ENCODE measurements at regions of chr3 and their contacts with region 1.

Region 1: DNA sequence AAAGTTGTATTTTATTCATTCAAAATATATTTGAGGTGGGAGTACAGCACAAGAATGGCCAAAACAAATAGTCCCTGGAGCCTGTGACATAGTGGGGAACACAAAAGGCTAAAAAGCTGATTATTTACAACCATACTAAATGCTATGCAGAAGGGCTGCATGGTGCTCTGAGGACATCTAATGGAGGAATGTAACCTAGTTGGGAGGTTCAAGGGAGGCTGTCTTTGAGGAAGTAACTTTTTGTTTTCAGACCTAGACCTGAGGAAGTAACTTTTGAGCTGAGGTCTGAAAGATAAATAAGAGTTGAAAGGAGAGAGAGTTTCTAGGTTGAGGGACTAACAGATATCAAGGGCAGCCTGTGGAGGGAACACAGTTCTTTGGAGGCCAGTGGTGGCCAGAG is 34.8 kb upstream of the RASA2 start:
- DNase-seq: peak in 10 of 14 experiments; percentile 15 to 81 (median 45)
- ATAC-seq: peak; percentile 96
- H3K4me3 ChIP-seq: no peak overlapping the region
- H3K4me3 Mint-ChIP-seq: no peak overlapping the region
- H3K27ac ChIP-seq: peak overlapping the region in 1 of 2 donors; percentile 11
- H3K27ac Mint-ChIP-seq: no peak overlapping the region
- H3K4me1 ChIP-seq: peaks cover 14% of the 10 kb centered on the region
- H3K4me1 Mint-ChIP-seq: peaks cover 14% of the 10 kb centered on the region
- H3K27me3 ChIP-seq: no peaks in the 10 kb centered on the region
- H3K27me3 Mint-ChIP-seq: no peaks in the 10 kb centered on the region
- CTCF ChIP-seq: peak; percentile 88

Region 2: DNA sequence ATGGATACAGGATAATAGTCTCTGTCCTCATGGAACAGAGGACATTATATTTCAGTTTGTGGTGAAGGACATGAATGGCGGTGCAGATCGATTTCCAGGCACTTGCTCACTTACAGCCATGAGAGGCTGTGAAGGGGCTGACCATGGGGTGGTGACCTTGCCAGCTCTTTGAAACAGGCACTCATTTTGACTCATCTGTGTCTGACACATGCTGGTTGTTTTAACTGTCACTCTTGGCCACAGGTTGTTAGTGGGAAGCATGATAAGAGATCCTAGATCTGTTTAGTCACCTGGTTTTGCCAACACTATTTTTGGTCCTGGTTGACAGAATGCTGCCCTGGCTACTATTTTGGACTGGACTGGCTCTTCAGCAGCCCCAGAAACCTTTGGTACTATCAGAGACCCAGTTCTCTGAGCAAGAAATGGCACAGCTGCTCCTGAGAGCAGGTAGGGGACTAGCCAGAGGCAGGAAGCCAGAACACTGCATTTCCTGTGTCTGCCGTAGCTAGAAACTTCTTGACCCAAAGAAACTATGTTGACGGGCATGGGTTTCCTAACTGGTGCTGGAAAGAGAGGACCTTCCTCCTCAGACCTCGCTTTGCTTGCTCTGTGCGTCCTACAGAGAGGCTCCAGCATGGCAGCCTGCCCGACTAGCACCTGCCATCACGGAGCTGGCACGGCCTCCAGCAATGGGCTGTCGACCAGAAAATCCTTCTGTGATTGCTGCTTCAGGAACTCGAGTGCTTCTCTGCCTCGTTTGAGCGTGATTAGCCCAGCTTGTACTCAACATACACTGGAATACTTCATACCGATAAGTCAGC is 214.1 kb before region 1 on chr3:
- CTCF ChIA-PET with region 1: interaction called, 3 read pairs
- POLR2A ChIA-PET with region 1: interaction called, 15 read pairs
- intact Hi-C with region 1: loop called (anchors 5 kb)
- DNase-seq: peak in 3 of 14 experiments; percentile 21 to 31 (median 28)
- ATAC-seq: peak; percentile 36
- H3K4me3 ChIP-seq: no peak overlapping the region
- H3K4me3 Mint-ChIP-seq: peak overlapping the region; percentile 69
- H3K27ac ChIP-seq: peak overlapping the region; percentile 37 to 39
- H3K27ac Mint-ChIP-seq: peak overlapping the region; percentile 91
- H3K4me1 ChIP-seq: peaks cover 67% of the 10 kb centered on the region
- H3K4me1 Mint-ChIP-seq: peaks cover 97% of the 10 kb centered on the region
- H3K27me3 ChIP-seq: no peaks in the 10 kb centered on the region
- H3K27me3 Mint-ChIP-seq: no peaks in the 10 kb centered on the region
- CTCF ChIP-seq: no peak

Region 3: GRCh38 chr3:141303481-141304223 is 148.4 kb before region 1 on chr3:
- CTCF ChIA-PET with region 1: interaction called, 60 read pairs
- POLR2A ChIA-PET with region 1: interaction called, 14 read pairs
- intact Hi-C with region 1: loop called (anchors 1 to 2 kb)
- DNase-seq: peak in 11 of 14 experiments; percentile 16 to 89 (median 60)
- ATAC-seq: peak; percentile 43
- H3K4me3 ChIP-seq: no peak overlapping the region
- H3K4me3 Mint-ChIP-seq: no peak overlapping the region
- H3K27ac ChIP-seq: no peak overlapping the region
- H3K27ac Mint-ChIP-seq: no peak overlapping the region
- H3K4me1 ChIP-seq: peaks cover 61% of the 10 kb centered on the region
- H3K4me1 Mint-ChIP-seq: peaks cover 81% of the 10 kb centered on the region
- H3K27me3 ChIP-seq: no peaks in the 10 kb centered on the region
- H3K27me3 Mint-ChIP-seq: no peaks in the 10 kb centered on the region
- CTCF ChIP-seq: peak; percentile 80

Region 4: DNA sequence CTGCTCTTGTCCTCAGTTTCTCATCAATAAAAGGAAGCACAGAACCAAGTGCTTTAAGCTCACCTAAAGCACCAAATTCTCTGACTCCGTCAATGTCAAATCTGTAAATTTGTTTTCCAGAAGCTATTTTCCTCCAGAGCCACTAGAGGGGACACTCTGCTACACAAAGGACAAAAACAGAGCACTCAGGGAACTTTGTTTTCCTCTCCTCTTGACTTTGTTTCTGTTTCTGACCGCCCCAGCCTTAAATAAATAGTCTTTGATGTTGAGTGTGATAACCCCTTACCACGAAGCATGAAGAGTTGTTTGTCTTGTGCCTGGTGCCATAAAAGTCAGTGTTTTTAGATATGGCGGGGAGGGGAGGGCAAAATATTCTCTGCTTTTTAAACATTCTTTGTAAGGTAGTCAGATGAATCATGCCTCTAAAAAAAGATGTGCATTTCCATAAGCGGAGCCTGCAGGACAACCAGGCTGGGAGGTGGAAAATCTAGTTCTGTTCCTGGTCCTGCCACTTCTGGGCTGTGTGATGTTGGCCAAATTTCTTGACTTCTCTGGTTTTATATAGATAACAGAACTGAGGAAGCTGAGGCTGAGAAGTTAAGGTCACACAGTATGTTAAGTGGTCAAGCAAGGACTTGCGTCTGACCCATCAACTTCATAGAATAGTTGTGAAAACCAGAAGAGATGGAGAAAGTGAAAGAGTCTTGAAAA is 91.0 kb before region 1 on chr3:
- CTCF ChIA-PET with region 1: interaction called, 20 read pairs
- POLR2A ChIA-PET with region 1: interaction called, 23 read pairs
- intact Hi-C with region 1: loop called (anchors 1 to 2 kb)
- DNase-seq: peak in 4 of 14 experiments; percentile 21 to 71 (median 68)
- ATAC-seq: peak; percentile 79
- H3K4me3 ChIP-seq: no peak overlapping the region
- H3K4me3 Mint-ChIP-seq: no peak overlapping the region
- H3K27ac ChIP-seq: no peak overlapping the region
- H3K27ac Mint-ChIP-seq: no peak overlapping the region
- H3K4me1 ChIP-seq: peaks cover 9% of the 10 kb centered on the region
- H3K4me1 Mint-ChIP-seq: peaks cover 9% of the 10 kb centered on the region
- H3K27me3 ChIP-seq: no peaks in the 10 kb centered on the region
- H3K27me3 Mint-ChIP-seq: no peaks in the 10 kb centered on the region
- CTCF ChIP-seq: peak; percentile 76

Region 5: DNA sequence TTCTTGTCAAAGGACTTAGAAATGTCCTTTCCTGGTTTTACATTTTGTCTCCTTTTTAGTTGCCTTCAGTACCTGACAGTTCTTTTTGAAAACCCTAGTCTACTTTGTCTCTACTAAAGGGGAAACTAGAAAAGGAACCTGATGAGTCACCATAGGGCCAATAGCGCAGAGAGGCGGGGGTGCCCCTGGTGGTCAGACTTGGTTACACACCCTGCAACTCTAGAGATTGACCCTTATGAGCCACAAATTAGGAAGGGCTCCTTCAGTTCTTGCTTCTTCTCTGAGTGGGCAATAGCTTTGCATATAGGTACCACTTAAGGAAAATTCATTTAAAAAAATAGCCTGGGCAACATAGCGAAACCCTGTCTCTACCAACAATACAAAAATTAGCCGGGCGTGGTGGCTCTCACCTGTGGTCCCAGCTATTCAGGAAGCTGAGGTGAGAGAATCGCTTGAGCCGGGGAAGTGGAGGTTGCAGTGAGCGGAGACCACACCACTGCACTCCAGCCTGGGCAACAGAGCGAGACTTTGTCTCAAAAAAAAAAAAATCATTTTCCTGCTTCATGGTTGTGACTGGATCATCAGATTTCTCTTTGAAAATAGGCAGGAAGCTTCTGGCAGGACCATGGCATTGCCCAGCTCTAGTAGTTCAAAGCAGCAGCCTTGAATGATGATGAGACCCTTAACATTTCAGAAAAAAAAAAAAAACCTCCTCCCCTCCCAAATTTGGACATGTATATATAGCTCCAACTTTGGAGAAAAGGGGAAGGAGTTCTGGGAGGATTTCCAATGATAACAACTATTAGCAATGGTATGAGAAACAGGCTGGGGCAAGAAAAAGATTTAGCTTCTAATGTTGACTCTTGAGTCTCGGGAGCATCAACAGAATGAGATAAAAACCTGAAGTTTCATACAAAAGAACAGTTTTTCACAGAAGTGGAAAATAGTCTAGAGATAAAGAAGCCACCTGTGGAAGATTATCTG is 10.4 kb before region 1 on chr3:
- CTCF ChIA-PET with region 1: interaction called, 27 read pairs
- POLR2A ChIA-PET with region 1: interaction called, 4 read pairs
- intact Hi-C with region 1: no loop called
- DNase-seq: peak; percentile 42 to 86 (median 74)
- ATAC-seq: peak; percentile 97
- H3K4me3 ChIP-seq: no peak overlapping the region
- H3K4me3 Mint-ChIP-seq: peak overlapping the region; percentile 4
- H3K27ac ChIP-seq: no peak overlapping the region
- H3K27ac Mint-ChIP-seq: peak overlapping the region; percentile 68
- H3K4me1 ChIP-seq: peaks cover 9% of the 10 kb centered on the region
- H3K4me1 Mint-ChIP-seq: peaks cover 28% of the 10 kb centered on the region
- H3K27me3 ChIP-seq: no peaks in the 10 kb centered on the region
- H3K27me3 Mint-ChIP-seq: no peaks in the 10 kb centered on the region
- CTCF ChIP-seq: peak; percentile 75